ENCODE measurements at regions of chr7 and their contacts with region 1.

Region 1: DNA sequence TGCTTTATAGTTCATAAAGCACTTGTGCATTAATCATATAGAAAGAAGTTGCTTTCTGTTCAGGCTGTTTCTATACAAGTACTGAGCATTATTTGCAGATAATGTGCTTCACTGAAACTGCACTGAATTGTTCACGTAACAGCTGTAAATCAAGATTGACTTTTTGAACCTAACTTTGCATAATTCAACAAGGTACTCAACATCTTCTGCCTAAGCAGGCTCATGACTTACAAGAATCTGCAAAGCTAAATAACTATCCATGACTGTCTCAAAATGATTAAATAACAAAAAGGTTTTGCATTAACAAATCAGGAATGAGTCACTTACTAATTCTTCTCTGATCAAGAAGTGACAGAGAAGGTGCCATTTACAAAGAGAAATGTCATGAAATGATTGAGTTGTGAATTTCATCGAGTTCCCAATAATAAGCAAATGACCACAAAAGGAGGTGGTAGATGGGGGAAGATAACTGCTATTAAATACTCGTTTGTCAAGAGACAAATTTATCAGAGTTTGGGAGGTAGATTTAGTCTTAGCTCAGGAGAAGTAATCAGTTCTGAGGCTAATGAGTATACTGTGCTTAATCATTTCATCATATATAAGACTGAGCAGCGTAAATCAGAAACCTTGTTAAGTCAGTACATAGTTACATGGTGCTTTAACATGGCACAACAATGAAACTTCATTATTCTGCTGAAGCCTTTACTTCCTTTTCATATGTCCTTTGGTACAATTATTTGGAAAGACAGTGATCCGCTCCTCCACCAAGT is 161.3 kb upstream of the LRRN3 start:
- DNase-seq: no peak

Region 2: DNA sequence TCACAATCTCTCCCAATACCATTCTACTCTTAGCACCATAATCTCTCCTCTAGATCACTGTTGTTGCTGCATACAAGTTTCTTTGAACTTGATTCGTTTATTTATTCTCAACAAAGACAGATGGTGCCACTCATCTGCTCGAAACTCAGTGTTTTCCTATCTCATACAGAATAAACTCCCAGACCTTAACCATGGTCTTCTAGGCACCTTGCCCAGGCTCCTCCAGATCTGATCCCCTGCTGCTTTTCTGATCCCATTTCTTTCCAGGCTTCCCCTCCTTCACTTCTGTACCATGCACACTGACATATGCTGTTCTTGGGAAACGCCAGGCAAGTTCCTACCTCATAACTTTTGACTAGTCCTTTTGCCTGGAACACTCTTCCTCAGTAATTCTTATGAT is 1714.3 kb before region 1 on chr7:
- intact Hi-C with region 1: loop called in 1 of 2 experiments (anchors 5 kb)
- DNase-seq: no peak

Region 3: GRCh38 chr7:110909117-110909516 is 20.5 kb before region 1 on chr7:
- intact Hi-C with region 1: no loop called
- DNase-seq: no peak

Measured in posterior vena cava (tissue), 2 donors.